Activated CD4-positive, alpha-beta T cell treated with anti-CD3 and anti-CD28 coated beads for 36 hours (primary cell): ENCODE measurements at regions of chr1 and their contacts with region 1.

Region 1: GRCh38 chr1:156226116-156226538 is 13.3 kb downstream of the PMF1 start:
- DNase-seq: no peak
- ATAC-seq: no peak
- H3K4me3 Mint-ChIP-seq: no peak overlapping the region
- H3K27ac Mint-ChIP-seq: peak overlapping the region; percentile 85
- H3K4me1 Mint-ChIP-seq: peaks cover 47% of the 10 kb centered on the region
- H3K27me3 Mint-ChIP-seq: no peaks in the 10 kb centered on the region

Region 2: DNA sequence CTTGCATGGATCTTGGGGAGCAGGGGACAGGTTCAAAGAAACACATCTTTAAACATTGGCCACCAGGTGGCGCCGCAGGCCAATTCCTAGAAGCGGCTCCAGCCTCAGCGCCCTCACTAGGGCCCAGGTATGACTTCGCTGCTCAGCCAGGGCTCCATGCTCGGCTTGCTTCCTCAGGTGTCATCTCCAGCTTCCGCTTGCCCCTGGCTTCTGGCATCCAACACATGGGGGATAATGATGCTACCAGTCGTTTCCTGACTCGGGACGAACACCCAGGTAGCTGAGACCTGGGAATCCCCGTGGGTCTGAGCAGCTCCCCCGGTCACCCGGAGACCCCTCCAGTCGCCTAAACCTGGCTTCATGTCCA is 135.3 kb before region 1 on chr1:
- CTCF ChIA-PET with region 1: interaction called, 40 read pairs
- POLR2A ChIA-PET with region 1: interaction called, 30 read pairs
- intact Hi-C with region 1: loop called (anchors 1 to 2 kb)
- DNase-seq: peak; percentile 95
- ATAC-seq: peak; percentile 95
- H3K4me3 Mint-ChIP-seq: no peak overlapping the region
- H3K27ac Mint-ChIP-seq: no peak overlapping the region
- H3K4me1 Mint-ChIP-seq: peaks cover 12% of the 10 kb centered on the region
- H3K27me3 Mint-ChIP-seq: peaks cover 16% of the 10 kb centered on the region

Region 3: GRCh38 chr1:156104065-156104810 is 121.9 kb before region 1 on chr1:
- CTCF ChIA-PET with region 1: interaction called, 3 read pairs
- POLR2A ChIA-PET with region 1: no interaction called
- intact Hi-C with region 1: loop called in 1 of 2 experiments (anchors 1 kb)
- DNase-seq: peak; percentile 64
- ATAC-seq: peak; percentile 30
- H3K4me3 Mint-ChIP-seq: no peak overlapping the region
- H3K27ac Mint-ChIP-seq: peak overlapping the region; percentile 58
- H3K4me1 Mint-ChIP-seq: peaks cover 74% of the 10 kb centered on the region
- H3K27me3 Mint-ChIP-seq: peaks cover 5% of the 10 kb centered on the region

Region 4: DNA sequence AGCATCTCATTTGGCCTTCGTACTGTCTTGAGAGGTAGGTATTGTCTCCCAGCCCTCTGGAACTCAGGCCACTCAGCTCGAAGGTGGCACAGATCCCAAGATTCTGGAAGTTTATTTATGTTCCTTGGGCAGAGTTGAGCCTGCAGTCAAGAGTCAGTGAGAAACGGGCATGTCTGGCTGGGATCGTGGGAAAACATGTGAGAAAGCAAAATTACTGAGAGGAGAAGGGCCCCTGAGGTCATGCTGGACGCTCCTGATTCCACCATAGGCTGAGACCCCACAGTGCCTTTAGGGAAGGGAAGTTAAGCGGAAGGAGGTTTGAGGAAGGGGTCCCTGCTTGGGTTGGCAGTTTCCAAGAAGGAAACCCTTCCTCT is 85.3 kb before region 1 on chr1:
- CTCF ChIA-PET with region 1: interaction called, 229 read pairs
- POLR2A ChIA-PET with region 1: interaction called, 4 read pairs
- intact Hi-C with region 1: loop called (anchors 1 kb)
- DNase-seq: no peak
- ATAC-seq: no peak
- H3K4me3 Mint-ChIP-seq: no peak overlapping the region
- H3K27ac Mint-ChIP-seq: peak overlapping the region; percentile 5
- H3K4me1 Mint-ChIP-seq: peaks cover 4% of the 10 kb centered on the region
- H3K27me3 Mint-ChIP-seq: no peaks in the 10 kb centered on the region

Region 5: DNA sequence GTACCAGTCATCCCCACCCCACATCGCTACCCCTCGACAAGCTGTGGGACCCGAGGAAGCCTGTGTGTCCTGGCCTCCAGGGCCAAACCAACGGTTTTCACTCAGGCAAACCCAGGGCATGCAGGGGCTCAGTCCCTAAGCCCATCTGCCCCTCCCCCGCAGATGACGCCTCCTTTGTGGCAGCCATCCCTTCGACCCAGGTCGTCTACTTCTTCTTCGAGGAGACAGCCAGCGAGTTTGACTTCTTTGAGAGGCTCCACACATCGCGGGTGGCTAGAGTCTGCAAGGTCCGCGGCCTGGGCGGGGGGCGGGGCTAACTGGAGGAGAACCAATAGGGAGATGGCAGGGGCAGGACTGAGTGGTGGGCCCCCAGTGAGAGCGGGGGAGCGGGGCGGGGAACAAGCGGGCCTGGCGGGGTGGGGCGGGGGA is 65.4 kb before region 1 on chr1:
- CTCF ChIA-PET with region 1: interaction called, 59 read pairs
- POLR2A ChIA-PET with region 1: interaction called, 9 read pairs
- intact Hi-C with region 1: loop called in 1 of 2 experiments (anchors 1 kb)
- DNase-seq: peak; percentile 86
- ATAC-seq: peak; percentile 60
- H3K4me3 Mint-ChIP-seq: peak overlapping the region; percentile 68
- H3K27ac Mint-ChIP-seq: peak overlapping the region; percentile 88
- H3K4me1 Mint-ChIP-seq: peaks cover 84% of the 10 kb centered on the region
- H3K27me3 Mint-ChIP-seq: no peaks in the 10 kb centered on the region

Region 6: DNA sequence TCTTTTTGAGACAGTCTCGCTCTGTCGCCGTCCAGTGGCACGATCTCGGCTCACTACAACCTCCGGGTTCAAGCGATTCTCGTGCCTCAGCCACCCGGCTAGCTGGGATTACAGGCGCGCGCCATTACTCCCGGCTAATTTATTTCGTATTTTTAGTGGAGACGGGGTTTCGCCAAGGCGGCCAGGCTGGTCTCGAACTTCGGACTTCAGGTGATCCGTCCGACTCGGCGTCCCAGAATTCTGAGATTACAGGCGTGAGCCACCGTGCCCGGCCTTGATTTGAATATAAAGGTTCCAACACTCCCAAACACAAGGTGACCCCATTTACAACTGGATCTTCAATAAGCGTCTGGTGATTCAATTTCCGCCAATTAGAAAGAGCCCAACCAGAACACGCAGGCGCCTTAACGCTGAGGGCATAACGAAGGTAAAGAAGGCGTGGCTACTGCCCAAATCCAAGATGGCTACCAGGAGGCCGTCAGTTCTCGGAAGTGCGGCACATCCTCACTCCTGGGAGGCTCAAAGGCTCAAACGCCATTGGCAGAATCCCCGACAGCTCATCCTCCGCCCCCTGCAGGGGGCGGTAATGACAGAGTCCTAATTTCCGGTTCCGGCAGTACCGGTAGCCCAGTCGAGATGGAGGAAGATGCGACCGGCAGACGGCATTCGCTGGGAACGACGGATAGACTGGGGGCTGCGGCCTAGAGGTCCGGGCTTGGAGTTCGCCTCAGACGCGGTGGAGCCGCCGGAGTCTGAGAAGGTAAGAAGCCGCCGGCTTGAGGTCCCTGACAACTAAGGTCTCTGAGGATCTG is 32.4 kb before region 1 on chr1 and contains the start of gene SLC25A44:
- CTCF ChIA-PET with region 1: interaction called, 9 read pairs
- POLR2A ChIA-PET with region 1: interaction called, 4 read pairs
- intact Hi-C with region 1: loop called (anchors 1 to 2 kb)
- DNase-seq: peak; percentile 98
- ATAC-seq: peak; percentile 96
- H3K4me3 Mint-ChIP-seq: peak within 1 kb of the TSS; percentile 100
- H3K27ac Mint-ChIP-seq: peak within 1 kb of the TSS; percentile 97
- H3K4me1 Mint-ChIP-seq: peaks cover 43% of the 10 kb centered on the region
- H3K27me3 Mint-ChIP-seq: no peaks in the 10 kb centered on the region
- total RNA-seq, gene SLC25A44: 42.4 to 51.9 TPM

Region 7: DNA sequence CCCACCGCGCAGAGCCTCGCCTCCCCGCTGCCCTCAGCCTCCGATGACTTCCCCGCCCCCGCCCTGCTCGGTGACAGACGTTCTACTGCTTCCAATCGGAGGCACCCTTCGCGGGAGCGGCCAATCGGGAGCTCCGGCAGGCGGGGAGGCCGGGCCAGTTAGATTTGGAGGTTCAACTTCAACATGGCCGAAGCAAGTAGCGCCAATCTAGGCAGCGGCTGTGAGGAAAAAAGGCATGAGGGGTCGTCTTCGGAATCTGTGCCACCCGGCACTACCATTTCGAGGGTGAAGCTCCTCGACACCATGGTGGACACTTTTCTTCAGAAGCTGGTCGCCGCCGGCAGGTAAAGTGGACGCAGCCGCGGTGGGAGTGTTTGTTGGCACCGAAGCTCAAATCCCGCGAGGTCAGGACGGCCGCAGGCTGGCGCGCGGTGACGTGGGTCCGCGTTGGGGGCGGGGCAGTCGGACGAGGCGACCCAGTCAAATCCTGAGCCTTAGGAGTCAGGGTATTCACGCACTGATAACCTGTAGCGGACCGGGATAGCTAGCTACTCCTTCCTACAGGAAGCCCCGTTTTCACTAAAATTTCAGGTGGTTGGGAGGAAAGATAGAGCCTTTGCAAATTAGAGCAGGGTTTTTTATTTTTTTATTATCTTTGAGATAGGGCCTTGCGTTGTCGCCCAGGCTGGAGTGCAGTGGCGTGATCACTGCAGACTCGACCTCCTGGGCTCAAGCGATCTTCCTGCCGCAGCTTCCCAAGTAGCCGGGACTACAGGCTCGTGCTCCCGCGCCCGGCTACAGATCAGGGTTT is 13.1 kb before region 1 on chr1 and contains the start of gene PMF1:
- CTCF ChIA-PET with region 1: interaction called, 47 read pairs
- POLR2A ChIA-PET with region 1: interaction called, 34 read pairs
- intact Hi-C with region 1: loop called in 1 of 2 experiments (anchors 1 kb)
- DNase-seq: peak; percentile 98
- ATAC-seq: peak; percentile 90
- H3K4me3 Mint-ChIP-seq: peak within 1 kb of the TSS; percentile 76
- H3K27ac Mint-ChIP-seq: peak within 1 kb of the TSS; percentile 98
- H3K4me1 Mint-ChIP-seq: peaks cover 41% of the 10 kb centered on the region
- H3K27me3 Mint-ChIP-seq: no peaks in the 10 kb centered on the region
- total RNA-seq, gene PMF1: 108 to 117 TPM

Region 8: GRCh38 chr1:156385534-156386031 is 159.5 kb after region 1 on chr1:
- CTCF ChIA-PET with region 1: no interaction called
- POLR2A ChIA-PET with region 1: no interaction called
- intact Hi-C with region 1: no loop called
- DNase-seq: peak; percentile 87
- ATAC-seq: peak; percentile 81
- H3K4me3 Mint-ChIP-seq: no peak overlapping the region
- H3K27ac Mint-ChIP-seq: no peak overlapping the region
- H3K4me1 Mint-ChIP-seq: peaks cover 5% of the 10 kb centered on the region
- H3K27me3 Mint-ChIP-seq: peaks cover 21% of the 10 kb centered on the region

Region 9: DNA sequence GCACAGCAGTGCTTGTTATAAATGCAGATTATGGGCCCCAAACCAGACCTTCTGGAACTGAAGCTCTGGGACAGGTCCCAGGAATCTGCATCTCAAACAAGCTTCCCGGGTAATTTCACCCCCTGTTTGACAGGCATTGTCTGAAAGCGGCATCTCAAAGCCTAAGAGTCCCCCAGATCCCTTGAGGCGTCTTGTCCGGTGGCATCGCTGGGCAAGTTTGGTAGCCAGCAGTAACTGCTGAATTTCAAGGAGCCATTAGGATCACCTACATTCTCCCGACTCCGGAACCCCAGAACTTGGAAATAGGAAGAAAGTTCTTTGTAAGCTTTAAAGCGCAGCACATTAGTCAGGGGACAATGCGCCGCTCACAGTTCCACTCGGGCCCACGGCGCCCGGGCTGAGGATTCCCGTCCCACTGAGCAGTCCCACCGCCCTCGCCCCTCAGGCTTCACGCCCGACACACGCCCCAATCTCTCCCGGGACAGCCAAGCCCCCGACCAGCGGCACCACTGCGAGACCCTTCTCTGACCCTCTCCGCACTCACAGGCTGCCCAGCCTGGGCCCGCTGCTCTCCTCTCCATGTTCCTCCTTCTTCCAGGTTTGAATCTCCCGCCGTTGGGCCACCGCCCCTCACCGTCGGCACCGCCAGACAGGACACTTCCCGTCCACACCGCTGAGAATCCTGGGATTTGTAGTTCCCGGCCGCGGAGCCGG is 346.0 kb after region 1 on chr1 and contains the start of gene IQGAP3:
- CTCF ChIA-PET with region 1: no interaction called
- POLR2A ChIA-PET with region 1: no interaction called
- intact Hi-C with region 1: no loop called
- DNase-seq: peak; percentile 87
- ATAC-seq: peak; percentile 96
- H3K4me3 Mint-ChIP-seq: peak within 1 kb of the TSS; percentile 89
- H3K27ac Mint-ChIP-seq: peak within 1 kb of the TSS; percentile 73
- H3K4me1 Mint-ChIP-seq: peaks cover 22% of the 10 kb centered on the region
- H3K27me3 Mint-ChIP-seq: peaks cover 32% of the 10 kb centered on the region
- total RNA-seq, gene IQGAP3: 14.9 to 16.0 TPM